H1 (cell line): ENCODE measurements at regions of chr3 and their contacts with region 1.

Region 1: DNA sequence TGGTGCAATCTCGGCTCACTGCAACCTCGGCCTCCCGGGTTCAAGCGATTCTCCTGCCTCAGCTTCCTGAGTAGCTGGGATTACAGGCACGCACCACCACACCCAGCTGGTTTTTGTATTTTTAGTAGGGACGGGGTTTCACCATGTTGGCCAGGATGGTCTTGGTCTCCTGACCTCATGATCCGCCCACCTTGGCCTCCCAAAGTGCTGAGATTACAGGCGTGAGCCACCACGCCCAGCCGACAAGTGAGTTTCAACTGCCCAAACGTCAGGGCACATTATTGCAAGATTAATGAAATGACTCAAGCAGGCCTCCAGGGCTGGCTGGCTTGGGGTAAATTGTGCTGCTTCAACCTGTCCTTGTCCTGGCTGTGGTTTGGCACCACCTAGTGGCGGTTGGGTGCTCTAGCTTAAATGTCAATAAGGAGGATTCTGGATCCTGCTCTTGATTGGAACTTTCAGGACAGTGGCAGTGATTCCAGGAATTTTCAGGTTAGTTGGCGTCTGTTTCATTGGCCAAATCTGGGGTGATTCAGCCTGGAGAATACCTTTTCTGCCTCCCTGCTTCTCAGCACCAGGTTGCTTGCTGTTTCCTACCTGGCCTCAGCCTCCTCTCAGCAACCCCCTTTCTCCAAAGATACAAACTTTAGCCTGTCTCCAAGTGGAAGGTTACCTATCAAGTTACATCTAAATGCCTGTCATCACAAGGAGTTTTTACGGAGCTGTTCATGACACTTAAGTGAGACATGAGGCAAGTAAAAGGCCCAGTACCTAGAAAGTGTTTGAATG is 32.4 kb upstream of the SACM1L start:
- DNase-seq: peak; percentile 79 to 88
- H3K4me3 ChIP-seq: no peak overlapping the region
- H3K27ac ChIP-seq: no peak overlapping the region
- H3K4me1 ChIP-seq: no peaks in the 10 kb centered on the region
- H3K27me3 ChIP-seq: no peaks in the 10 kb centered on the region
- CTCF ChIP-seq: peak; percentile 86 to 99 (median 96)
- EP300 ChIP-seq: no peak
- POLR2A ChIP-seq: no peak
- RAD21 ChIP-seq: peak; percentile 95 to 98

Region 2: DNA sequence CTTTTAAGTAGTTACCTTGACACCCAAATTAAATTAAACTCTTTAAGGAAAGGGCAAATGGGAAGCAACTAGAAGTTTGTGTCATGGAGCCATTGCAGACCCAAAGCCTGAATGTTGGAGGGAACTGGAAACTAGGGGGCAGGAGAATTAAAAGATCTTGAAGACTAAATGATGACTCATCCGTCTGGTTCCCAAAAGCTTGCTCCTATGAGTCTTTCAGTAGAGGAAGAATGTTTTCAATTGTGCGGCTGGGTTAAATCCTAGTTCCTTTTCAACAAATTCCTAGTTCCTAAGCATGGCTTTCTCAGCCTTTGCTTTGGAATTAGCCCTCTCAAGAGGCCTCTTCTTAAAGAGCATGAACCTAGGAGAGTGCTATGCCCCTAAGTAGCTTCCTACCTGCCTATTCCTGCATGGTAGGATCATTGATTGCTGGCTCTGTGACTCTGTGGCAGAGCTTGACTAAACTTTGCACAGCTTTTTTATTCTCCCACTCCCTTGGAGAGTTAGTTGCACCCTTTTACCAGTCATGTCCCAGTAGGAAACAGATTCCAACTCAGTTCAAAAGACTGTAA is 613.0 kb before region 1 on chr3:
- CTCF ChIA-PET with region 1: interaction called, 15 read pairs
- POLR2A ChIA-PET with region 1: no interaction called
- DNase-seq: no peak
- H3K4me3 ChIP-seq: no peak overlapping the region
- H3K27ac ChIP-seq: no peak overlapping the region
- H3K4me1 ChIP-seq: no peaks in the 10 kb centered on the region
- H3K27me3 ChIP-seq: no peaks in the 10 kb centered on the region; a peak in 3 of 7 replicates
- CTCF ChIP-seq: no peak
- EP300 ChIP-seq: no peak
- POLR2A ChIP-seq: no peak
- RAD21 ChIP-seq: no peak

Region 3: GRCh38 chr3:45333549-45333948 is 323.2 kb before region 1 on chr3:
- CTCF ChIA-PET with region 1: no interaction called
- POLR2A ChIA-PET with region 1: no interaction called
- DNase-seq: no peak
- H3K4me3 ChIP-seq: no peak overlapping the region
- H3K27ac ChIP-seq: no peak overlapping the region
- H3K4me1 ChIP-seq: peaks cover 3 to 16% (median 9%) of the 10 kb centered on the region in 4 experiments
- H3K27me3 ChIP-seq: no peaks in the 10 kb centered on the region
- CTCF ChIP-seq: no peak
- EP300 ChIP-seq: no peak
- POLR2A ChIP-seq: no peak
- RAD21 ChIP-seq: peak in 1 of 2 experiments; percentile 24; a peak in 1 of 4 replicates

Region 4: GRCh38 chr3:45362758-45363157 is 294.0 kb before region 1 on chr3:
- CTCF ChIA-PET with region 1: no interaction called
- POLR2A ChIA-PET with region 1: no interaction called
- DNase-seq: no peak
- H3K4me3 ChIP-seq: no peak overlapping the region
- H3K27ac ChIP-seq: no peak overlapping the region
- H3K4me1 ChIP-seq: no peaks in the 10 kb centered on the region
- H3K27me3 ChIP-seq: no peaks in the 10 kb centered on the region
- CTCF ChIP-seq: no peak
- EP300 ChIP-seq: no peak
- POLR2A ChIP-seq: no peak
- RAD21 ChIP-seq: no peak

Region 5: GRCh38 chr3:45546716-45547701 is 109.8 kb before region 1 on chr3:
- CTCF ChIA-PET with region 1: interaction called, 75 read pairs
- POLR2A ChIA-PET with region 1: interaction called, 3 read pairs
- DNase-seq: peak; percentile 13 to 90
- H3K4me3 ChIP-seq: no peak overlapping the region
- H3K27ac ChIP-seq: no peak overlapping the region
- H3K4me1 ChIP-seq: no peaks in the 10 kb centered on the region; a peak in 1 of 7 replicates
- H3K27me3 ChIP-seq: no peaks in the 10 kb centered on the region
- CTCF ChIP-seq: peak; percentile 57 to 89 (median 76)
- EP300 ChIP-seq: no peak
- POLR2A ChIP-seq: no peak
- RAD21 ChIP-seq: peak; percentile 57 to 69

Region 6: DNA sequence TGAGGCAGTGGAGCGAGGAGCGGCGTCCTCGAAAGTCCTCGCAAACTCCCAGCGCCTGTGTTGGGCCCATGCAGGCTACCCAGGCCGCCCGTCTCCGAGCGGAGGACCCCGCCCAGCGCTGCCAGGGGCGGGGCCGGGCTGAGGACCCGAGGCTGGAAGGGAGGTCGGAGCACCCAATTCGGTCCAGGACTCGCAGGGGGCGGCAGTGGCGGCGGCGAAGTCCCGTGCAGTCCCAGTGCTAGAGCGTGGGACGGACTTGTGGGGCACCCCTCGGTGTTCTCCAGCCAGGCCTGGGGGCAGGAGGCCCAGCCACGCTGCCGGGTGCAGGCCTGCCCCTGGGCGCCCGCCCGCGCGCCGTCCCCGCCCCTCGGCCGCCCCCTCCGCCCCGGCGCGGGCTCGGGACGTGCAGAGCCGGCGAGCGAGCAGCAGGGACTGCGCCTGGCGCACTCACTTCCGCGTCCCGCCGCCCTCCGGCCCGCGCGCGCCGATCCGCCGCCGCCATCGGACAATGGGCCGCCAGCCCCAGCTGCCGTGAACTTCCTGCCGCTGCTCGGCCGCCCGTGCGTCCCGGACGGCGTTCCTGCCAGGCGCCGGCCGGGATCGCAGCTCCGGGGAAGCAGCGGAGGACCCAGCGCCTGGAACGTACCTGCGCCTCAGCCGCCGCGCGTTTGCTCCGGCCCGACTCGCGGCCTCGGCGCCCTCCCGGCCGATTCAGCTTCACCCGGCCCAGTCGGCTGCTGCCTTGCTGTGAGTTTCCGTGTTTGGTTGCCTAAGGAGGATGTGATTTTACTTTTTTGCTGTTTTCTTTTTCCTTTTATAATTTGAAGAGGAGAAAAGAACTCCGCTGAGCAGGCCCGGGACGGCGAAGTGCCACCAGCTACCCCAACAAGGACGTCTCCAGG is 62.8 kb before region 1 on chr3:
- CTCF ChIA-PET with region 1: interaction called, 37 read pairs
- POLR2A ChIA-PET with region 1: interaction called, 3 read pairs
- DNase-seq: peak in 1 of 2 experiments; percentile 88
- H3K4me3 ChIP-seq: peak overlapping the region; percentile 60 to 85 (median 74)
- H3K27ac ChIP-seq: peak overlapping the region; percentile 52; the same call in 1 of the 2 replicates
- H3K4me1 ChIP-seq: peaks cover 0 to 20% (median 10%) of the 10 kb centered on the region in 4 experiments; a peak in 6 of 7 replicates
- H3K27me3 ChIP-seq: no peaks in the 10 kb centered on the region; a peak in 2 of 7 replicates
- CTCF ChIP-seq: no peak
- EP300 ChIP-seq: no peak
- POLR2A ChIP-seq: peak in 1 of 2 experiments; percentile 68; a peak in 2 of 3 replicates
- RAD21 ChIP-seq: 0 out of 4 replicates have a peak, but pooled peaks of 1 of the 2 experiments have one; percentile 6

Region 7: DNA sequence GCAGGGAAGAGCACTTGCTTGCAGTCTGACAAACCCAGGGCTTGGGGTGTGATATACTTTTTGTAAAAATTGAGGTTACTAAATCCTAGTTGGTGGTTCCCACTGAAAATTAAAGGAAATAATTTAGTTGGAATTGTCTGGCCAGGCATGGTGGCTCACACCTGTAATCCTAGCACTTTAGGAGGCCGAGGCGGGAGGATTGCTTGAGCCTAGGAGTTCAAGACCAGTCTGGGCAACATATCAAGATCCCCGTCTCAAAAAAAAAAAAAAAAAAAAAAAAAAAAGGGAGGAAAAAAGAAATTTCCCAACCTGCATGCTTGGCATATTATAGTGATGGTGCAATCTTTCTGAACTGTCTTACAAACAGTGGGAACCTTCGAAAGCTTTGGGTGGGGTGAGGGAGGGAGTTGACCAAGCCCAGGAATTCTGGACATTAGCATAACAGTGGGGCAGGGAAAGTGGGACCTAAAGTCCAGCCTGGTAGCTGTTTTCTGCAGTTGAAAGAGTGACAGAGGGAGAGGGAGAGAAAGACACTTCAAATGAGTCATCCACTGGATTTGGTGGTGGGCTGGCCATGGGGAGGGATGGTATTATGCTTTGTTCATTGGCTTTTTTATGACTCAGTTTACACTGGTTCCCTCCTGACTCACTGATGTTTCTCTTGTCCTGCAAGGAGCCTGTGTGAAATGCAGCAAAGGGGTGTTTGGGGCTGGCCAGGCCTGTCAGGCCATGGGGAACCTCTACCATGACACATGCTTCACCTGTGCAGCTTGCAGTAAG is 21.1 kb before region 1 on chr3:
- CTCF ChIA-PET with region 1: interaction called, 43 read pairs
- POLR2A ChIA-PET with region 1: interaction called, 3 read pairs
- DNase-seq: peak in 1 of 2 experiments; percentile 78
- H3K4me3 ChIP-seq: no peak overlapping the region
- H3K27ac ChIP-seq: peak overlapping the region; percentile 21; the same call in 1 of the 2 replicates
- H3K4me1 ChIP-seq: peaks cover 9 to 17% (median 13%) of the 10 kb centered on the region in 4 experiments
- H3K27me3 ChIP-seq: no peaks in the 10 kb centered on the region
- CTCF ChIP-seq: no peak
- EP300 ChIP-seq: no peak
- POLR2A ChIP-seq: no peak
- RAD21 ChIP-seq: no peak

Region 8: DNA sequence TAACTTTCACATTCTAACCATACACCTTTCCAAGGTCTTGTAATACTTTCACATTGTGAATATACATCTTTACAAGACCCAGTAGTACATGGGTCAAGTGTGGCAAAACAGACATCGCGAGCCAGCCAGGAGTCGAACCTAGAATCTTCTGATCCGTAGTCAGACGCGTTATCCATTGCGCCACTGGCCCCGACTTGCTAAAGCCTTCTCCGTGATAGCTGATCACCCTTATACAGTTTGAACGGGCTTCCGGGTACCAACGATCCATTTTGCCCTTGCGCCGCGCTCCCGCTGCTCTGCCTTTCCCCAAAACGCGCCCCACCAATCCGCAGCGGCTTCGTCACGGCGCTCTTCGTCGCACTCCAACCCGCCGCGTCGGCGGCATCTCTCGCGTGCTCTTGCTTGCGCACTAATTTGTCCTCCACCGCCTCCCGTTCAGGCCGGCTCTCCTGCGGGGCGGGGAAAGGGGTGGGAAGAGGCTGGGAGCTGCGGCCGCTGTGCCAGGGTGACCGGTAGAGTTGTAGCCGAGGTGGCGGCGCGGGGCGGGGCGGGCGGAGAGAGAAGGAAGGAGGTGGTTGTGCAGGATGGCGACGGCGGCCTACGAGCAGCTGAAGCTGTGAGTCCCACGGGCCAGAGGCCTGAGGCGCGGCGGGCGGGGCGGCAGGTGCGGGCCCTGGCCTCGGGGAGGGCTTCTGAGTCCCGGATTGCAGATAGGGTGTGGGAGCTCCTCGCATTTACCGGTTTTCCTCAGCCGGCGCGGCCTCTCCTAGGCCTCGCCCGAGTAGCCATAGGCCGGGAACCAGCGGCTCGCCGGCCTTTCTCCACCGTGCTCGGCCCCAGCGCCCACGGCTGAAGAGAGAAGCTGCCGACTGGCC is 32.4 kb after region 1 on chr3 and contains the start of gene SACM1L:
- CTCF ChIA-PET with region 1: interaction called, 11 read pairs
- POLR2A ChIA-PET with region 1: interaction called, 3 read pairs
- DNase-seq: peak; percentile 97 to 98
- H3K4me3 ChIP-seq: peak within 1 kb of the TSS; percentile 61 to 87 (median 80)
- H3K27ac ChIP-seq: peak within 1 kb of the TSS; percentile 81
- H3K4me1 ChIP-seq: peaks cover 9 to 20% (median 10%) of the 10 kb centered on the region in 4 experiments; a peak in 6 of 7 replicates
- H3K27me3 ChIP-seq: no peaks in the 10 kb centered on the region
- CTCF ChIP-seq: no peak
- EP300 ChIP-seq: peak in 1 of 2 experiments; percentile 67; a peak in 1 of 3 replicates
- POLR2A ChIP-seq: peak in 1 of 2 experiments; percentile 73; a peak in 2 of 3 replicates
- RAD21 ChIP-seq: no peak
- total RNA-seq, gene SACM1L: 59.7 and 61.0 TPM in 2 replicates

Region 9: GRCh38 chr3:45772341-45773035 is 115.7 kb after region 1 on chr3:
- CTCF ChIA-PET with region 1: no interaction called
- POLR2A ChIA-PET with region 1: no interaction called
- DNase-seq: no peak
- H3K4me3 ChIP-seq: no peak overlapping the region
- H3K27ac ChIP-seq: no peak overlapping the region
- H3K4me1 ChIP-seq: no peaks in the 10 kb centered on the region; a peak in 1 of 7 replicates
- H3K27me3 ChIP-seq: no peaks in the 10 kb centered on the region
- CTCF ChIP-seq: no peak
- EP300 ChIP-seq: no peak
- POLR2A ChIP-seq: no peak
- RAD21 ChIP-seq: no peak

Region 10: GRCh38 chr3:45832691-45833090 is 175.9 kb after region 1 on chr3:
- CTCF ChIA-PET with region 1: no interaction called
- POLR2A ChIA-PET with region 1: no interaction called
- DNase-seq: no peak
- H3K4me3 ChIP-seq: no peak overlapping the region
- H3K27ac ChIP-seq: no peak overlapping the region
- H3K4me1 ChIP-seq: no peaks in the 10 kb centered on the region
- H3K27me3 ChIP-seq: no peaks in the 10 kb centered on the region
- CTCF ChIP-seq: peak in 2 of 3 experiments; percentile 56 to 69; a peak in 3 of 4 replicates
- EP300 ChIP-seq: no peak
- POLR2A ChIP-seq: no peak
- RAD21 ChIP-seq: peak; percentile 75 to 83